ENCODE measurements at regions of chr6 and their contacts with region 1.

Region 1: GRCh38 chr6:111750753-111751684 is 122.2 kb downstream of the FYN start:
- DNase-seq: peak; percentile 83
- H3K4me3 ChIP-seq: peak overlapping the region; percentile 36
- H3K27ac ChIP-seq: peak overlapping the region; percentile 38
- H3K4me1 ChIP-seq: peaks cover 75% of the 10 kb centered on the region
- CTCF ChIP-seq: no peak

Region 2: GRCh38 chr6:111721753-111722154 is 29.3 kb before region 1 on chr6:
- CTCF ChIA-PET with region 1: interaction called, 4 read pairs
- POLR2A ChIA-PET with region 1: interaction called, 5 read pairs
- intact Hi-C with region 1: loop called (anchors 1 kb)
- DNase-seq: peak; percentile 55
- H3K4me3 ChIP-seq: no peak overlapping the region
- H3K27ac ChIP-seq: no peak overlapping the region
- H3K4me1 ChIP-seq: peaks cover 38% of the 10 kb centered on the region
- CTCF ChIP-seq: peak; percentile 83